ENCODE measurements at regions of chr2 and their contacts with region 1.

Region 1: GRCh38 chr2:198374375-198375082 is 570.1 kb downstream of the PLCL1 start:
- DNase-seq: peak; percentile 48
- H3K4me3 ChIP-seq: no peak overlapping the region
- H3K27ac ChIP-seq: no peak overlapping the region
- H3K4me1 ChIP-seq: no peaks in the 10 kb centered on the region
- H3K27me3 ChIP-seq: no peaks in the 10 kb centered on the region
- CTCF ChIP-seq: peak; percentile 34 to 66
- POLR2A ChIP-seq: no peak

Region 2: GRCh38 chr2:199471443-199472057 is 1097.0 kb after region 1 on chr2:
- CTCF ChIA-PET with region 1: no interaction called
- POLR2A ChIA-PET with region 1: no interaction called
- dilution Hi-C with region 1: no loop called
- intact Hi-C with region 1: loop called (anchors 5 kb)
- DNase-seq: peak; percentile 36
- H3K4me3 ChIP-seq: no peak overlapping the region
- H3K27ac ChIP-seq: no peak overlapping the region
- H3K4me1 ChIP-seq: no peaks in the 10 kb centered on the region
- H3K27me3 ChIP-seq: peaks cover 60 to 68% of the 10 kb centered on the region in 2 experiments
- CTCF ChIP-seq: peak; percentile 72 to 94
- POLR2A ChIP-seq: no peak

Region 3: GRCh38 chr2:199739413-199740110 is 1365.0 kb after region 1 on chr2:
- CTCF ChIA-PET with region 1: interaction called, 7 read pairs
- POLR2A ChIA-PET with region 1: no interaction called
- dilution Hi-C with region 1: no loop called
- intact Hi-C with region 1: loop called (anchors 1 kb)
- DNase-seq: peak; percentile 51
- H3K4me3 ChIP-seq: no peak overlapping the region
- H3K27ac ChIP-seq: no peak overlapping the region
- H3K4me1 ChIP-seq: no peaks in the 10 kb centered on the region
- H3K27me3 ChIP-seq: peaks cover 5 to 7% of the 10 kb centered on the region in 2 experiments
- CTCF ChIP-seq: peak; percentile 80 to 83
- POLR2A ChIP-seq: no peak

Measured in endothelial cell of umbilical vein (primary cell).